IMR-90 (cell line): ENCODE measurements at regions of chr10 and their contacts with region 1.

Region 1: DNA sequence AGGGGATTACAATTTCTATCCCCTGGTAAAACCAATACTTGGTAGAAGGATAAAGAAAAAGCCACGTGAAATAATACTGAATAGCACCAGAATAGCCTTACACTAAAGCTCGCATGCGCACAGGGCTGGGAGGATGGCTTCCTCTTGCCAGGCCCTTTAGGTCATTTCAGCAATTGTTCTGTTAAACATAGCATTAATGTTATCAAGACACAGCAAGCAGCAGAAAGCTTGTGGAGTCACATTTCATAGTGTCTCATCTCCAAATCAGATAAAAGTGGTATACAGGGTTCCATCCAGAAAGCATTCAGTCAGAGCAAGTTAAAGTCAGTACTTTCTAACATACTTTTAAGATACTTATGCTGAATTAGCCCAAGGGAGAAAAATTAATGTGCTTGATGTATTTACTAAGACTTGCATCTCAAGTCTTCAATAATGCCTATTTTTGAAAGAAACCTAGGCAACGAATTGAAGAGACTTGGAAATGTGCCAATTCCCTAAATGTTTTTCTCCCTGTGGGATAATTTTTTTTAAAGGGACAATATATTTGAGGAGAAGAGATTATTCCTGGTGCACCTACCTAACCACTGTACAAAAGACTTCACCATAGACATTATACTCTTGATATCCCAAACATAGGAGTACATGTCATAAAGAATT is 14.3 kb upstream of the NPM3 start:
- DNase-seq: no peak
- ATAC-seq: no peak; the same call in 1 of the 2 replicates
- H3K4me3 ChIP-seq: no peak overlapping the region
- H3K27ac ChIP-seq: no peak overlapping the region
- H3K4me1 ChIP-seq: no peaks in the 10 kb centered on the region
- H3K27me3 ChIP-seq: no peaks in the 10 kb centered on the region
- CTCF ChIP-seq: no peak
- POLR2A ChIP-seq: no peak
- RAD21 ChIP-seq: no peak

Region 2: DNA sequence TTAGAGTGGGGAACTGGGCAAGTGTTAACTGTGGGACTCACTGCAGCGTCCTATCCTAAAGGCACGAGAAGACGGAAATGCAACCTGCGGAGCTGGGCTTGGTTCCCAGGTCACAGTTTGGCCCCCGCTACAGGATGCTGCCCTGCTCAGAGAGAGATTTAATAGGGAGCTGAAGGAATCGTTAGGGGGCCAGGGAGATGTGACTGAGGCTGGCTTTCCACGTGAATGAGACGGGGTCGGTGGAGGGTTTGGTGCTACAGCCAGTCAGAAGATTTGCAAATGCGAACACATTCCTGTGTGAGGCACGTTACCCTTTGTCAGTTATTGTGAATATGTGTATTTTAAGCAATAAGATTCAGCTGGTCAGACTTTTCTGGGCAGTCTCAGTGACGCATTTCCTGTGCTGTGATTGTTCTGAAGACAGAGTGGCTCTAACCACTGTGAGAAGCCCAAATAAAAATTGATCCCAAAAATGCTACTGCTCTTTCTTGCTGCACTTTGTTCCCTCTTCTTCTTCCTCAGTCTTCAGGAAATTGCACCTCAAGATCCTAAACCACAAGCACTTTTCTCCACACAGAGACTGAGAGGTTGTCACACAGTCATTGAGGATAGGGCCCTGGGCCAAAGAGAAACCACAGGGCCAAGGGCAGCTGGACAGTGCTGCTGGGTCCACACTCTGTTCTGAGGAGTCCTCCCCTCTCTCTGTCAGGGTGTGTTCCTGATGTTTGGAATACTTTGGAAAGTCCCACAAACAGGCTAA is 1018.4 kb after region 1 on chr10:
- CTCF ChIA-PET with region 1: no interaction called
- POLR2A ChIA-PET with region 1: interaction called, 14 read pairs
- dilution Hi-C with region 1: no loop called
- in situ Hi-C with region 1: no loop called
- intact Hi-C with region 1: no loop called
- DNase-seq: peak; percentile 96
- ATAC-seq: peak; percentile 79
- H3K4me3 ChIP-seq: no peak overlapping the region
- H3K27ac ChIP-seq: peak overlapping the region; percentile 74
- H3K4me1 ChIP-seq: peaks cover 27% of the 10 kb centered on the region
- H3K27me3 ChIP-seq: no peaks in the 10 kb centered on the region
- CTCF ChIP-seq: no peak
- POLR2A ChIP-seq: peak; percentile 63
- RAD21 ChIP-seq: no peak